Activated T-helper 2 cell treated with anti-CD3 and anti-CD28 coated beads, Interferon-gamma antibody, Interleukin-2, Interleukin-4, amounts not matched to agents 10 μg/mL and 5 μg/mL and 100 μg/mL, durations not matched to agents 14 hours and 24 hours and 36 hours (primary cell): ENCODE measurements at regions of chr5 and their contacts with region 1.

Region 1: DNA sequence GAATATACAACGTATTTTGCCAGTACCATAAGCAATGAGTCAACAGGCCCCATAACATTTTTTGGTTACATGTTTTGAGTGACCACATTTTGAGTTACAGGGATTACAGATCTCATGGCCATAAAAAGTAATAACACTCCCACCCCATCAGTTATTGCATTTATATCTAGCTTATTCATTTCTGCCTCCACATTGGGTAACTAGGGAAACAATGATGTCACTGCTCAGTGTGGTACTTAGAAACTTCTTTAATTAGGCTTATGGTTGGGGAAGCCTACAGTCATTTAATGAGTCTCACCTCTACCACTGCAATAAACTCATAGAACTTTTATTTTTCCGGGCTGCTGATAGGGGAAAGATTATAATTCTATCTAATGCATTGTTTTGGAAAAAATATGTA is 39.9 kb upstream of the SMIM15 start:
- DNase-seq: no peak
- H3K4me3 Mint-ChIP-seq: no peak overlapping the region
- H3K27ac Mint-ChIP-seq: peak overlapping the region; percentile 12
- H3K4me1 Mint-ChIP-seq: peaks cover 9% of the 10 kb centered on the region
- H3K27me3 Mint-ChIP-seq: peaks cover 4% of the 10 kb centered on the region

Region 2: DNA sequence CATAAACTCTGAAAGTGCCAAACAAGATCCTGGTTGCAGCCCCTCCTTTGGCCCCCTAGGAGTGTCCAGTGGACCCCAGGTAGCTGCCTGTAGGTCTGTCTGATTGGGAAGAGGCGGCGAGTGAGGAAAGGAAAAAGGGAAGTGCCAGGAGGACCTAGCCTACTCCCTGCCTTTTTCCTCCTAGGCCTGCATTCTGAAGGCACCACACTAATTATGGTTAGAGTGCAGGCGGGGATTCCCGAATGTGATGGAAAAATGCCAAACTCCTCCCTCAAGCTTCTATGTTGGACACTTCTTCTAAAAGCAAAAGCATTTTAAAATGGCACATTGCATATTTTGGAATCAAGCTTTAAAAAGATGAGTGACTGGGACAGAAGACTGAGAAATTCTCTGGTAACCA is 43.3 kb after region 1 on chr5:
- intact Hi-C with region 1: no loop called
- DNase-seq: no peak
- H3K4me3 Mint-ChIP-seq: no peak overlapping the region
- H3K27ac Mint-ChIP-seq: no peak overlapping the region
- H3K4me1 Mint-ChIP-seq: no peaks in the 10 kb centered on the region
- H3K27me3 Mint-ChIP-seq: peaks cover 8% of the 10 kb centered on the region

Region 3: GRCh38 chr5:61306511-61307131 is 104.4 kb after region 1 on chr5:
- intact Hi-C with region 1: loop called (anchors 1 kb)
- DNase-seq: peak; percentile 46
- H3K4me3 Mint-ChIP-seq: peak overlapping the region; percentile 27
- H3K27ac Mint-ChIP-seq: peak overlapping the region; percentile 95
- H3K4me1 Mint-ChIP-seq: peaks cover 38% of the 10 kb centered on the region
- H3K27me3 Mint-ChIP-seq: no peaks in the 10 kb centered on the region

Region 4: DNA sequence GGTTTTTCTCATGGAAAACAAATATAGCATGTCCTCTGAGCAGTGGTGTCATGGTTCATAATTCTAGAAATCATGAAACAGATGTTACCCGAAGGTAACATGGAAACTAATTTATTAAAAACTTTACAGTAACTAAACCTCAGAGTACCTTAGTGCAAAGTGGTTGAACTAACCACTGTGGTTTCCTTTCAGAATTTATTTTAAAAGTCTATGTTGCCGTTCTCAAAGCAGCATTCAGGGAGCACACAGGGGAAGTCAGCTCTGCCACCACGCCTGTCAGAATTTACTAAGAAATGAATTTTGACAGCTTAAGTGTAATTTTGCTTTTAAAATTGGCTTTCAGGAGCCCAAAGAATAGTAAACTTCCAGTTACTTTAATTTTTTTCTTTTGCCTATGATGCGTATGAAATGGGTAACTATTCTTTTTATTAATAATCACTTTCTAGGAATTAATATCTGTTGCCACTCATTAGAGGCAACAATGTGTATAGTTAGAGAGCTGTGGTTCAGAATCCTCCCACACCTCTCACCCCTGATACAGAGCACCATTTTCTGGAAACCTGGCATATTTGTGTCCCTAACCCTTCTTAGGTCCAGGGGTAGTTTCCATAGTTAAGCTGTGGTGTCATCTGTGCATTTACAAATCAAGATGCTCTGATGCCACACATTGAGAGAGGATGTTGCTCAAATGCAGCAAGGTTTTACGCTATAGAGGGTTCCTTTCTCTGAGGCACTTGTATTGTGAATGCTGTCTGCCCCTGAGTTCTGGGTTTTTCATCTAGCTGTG is 332.5 kb after region 1 on chr5:
- intact Hi-C with region 1: loop called (anchors 1 kb)
- DNase-seq: no peak
- H3K4me3 Mint-ChIP-seq: no peak overlapping the region
- H3K27ac Mint-ChIP-seq: peak overlapping the region; percentile 4
- H3K4me1 Mint-ChIP-seq: peaks cover 16% of the 10 kb centered on the region
- H3K27me3 Mint-ChIP-seq: no peaks in the 10 kb centered on the region